HEK293T (cell line): ENCODE measurements at regions of chr14 and their contacts with region 1.

Region 1: GRCh38 chr14:28751467-28752058 is 15.0 kb upstream of the FOXG1 start:
- DNase-seq: peak; percentile 68

Region 2: GRCh38 chr14:28765831-28766468 is 14.4 kb after region 1 on chr14:
- CTCF ChIA-PET with region 1: interaction called, 12 read pairs
- POLR2A ChIA-PET with region 1: interaction called, 4 read pairs
- DNase-seq: no peak